ENCODE measurements at regions of chr15 and their contacts with region 1.

Region 1: DNA sequence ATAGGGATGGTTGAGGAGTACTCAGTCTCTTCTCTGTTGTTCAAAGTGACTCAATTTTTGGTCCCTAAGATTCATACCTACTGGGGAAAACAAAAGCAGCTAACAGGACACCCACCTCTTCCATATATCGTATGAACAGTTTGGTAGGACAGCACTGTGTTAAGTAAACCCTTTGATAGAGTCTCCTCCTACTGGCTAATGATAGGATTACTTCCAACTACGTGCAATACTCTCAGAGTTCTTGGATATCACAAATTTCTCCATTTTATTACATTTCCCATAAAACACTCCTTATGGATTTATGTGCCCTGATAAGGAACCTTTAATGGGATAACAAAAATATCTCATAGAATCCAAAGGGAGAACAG is 200.2 kb upstream of the GOLGA6L4 start:
- DNase-seq: no peak
- ATAC-seq: peak; percentile 55 to 67 (median 62)
- H3K4me3 ChIP-seq: no peak overlapping the region
- H3K27ac ChIP-seq: no peak overlapping the region
- H3K4me1 ChIP-seq: no peaks in the 10 kb centered on the region
- H3K27me3 ChIP-seq: no peaks in the 10 kb centered on the region
- CTCF ChIP-seq: peak; percentile 18 to 57 (median 46)
- POLR2A ChIP-seq: no peak

Region 2: DNA sequence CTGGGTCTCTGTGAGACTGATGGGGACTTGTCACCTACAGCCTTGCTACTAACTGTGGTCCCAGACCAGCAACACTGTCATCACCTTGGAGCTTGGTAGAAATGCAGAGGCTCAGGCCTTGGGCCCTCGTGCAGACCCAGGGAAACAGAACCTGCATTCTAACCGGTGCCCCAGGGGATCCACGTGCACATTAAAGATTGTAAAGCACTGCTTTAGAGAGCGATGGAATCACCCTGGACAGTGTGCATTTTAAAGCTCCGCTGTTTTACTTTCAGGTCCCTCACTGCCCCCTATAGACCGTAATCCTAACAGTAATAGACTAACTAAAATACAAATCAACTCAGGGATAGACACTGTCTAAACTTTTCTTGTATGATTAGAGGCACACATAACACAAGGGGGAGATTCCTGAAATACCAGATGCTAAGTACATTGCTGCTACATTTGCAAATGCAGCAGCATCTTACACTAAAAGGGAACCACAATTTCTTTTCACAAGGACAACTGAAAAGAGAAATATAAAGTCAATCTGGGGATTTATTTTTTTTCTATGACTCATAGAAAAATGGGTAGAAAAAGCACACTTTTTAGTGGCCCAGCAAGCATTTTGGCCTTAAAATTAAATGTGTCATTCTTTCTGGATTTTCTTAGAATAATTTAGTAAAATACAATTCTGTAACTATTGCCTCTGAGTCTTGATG is 598.8 kb before region 1 on chr15:
- intact Hi-C with region 1: loop called in 4 of 10 experiments (anchors 5 to 10 kb)
- DNase-seq: no peak
- ATAC-seq: peak in 2 of 4 donors; percentile 51 to 53
- H3K4me3 ChIP-seq: no peak overlapping the region
- H3K27ac ChIP-seq: no peak overlapping the region
- H3K4me1 ChIP-seq: no peaks in the 10 kb centered on the region
- H3K27me3 ChIP-seq: peaks cover 0 to 28% (median 6%) of the 10 kb centered on the region in 9 donors
- CTCF ChIP-seq: peak in 11 of 12 donors; percentile 24 to 47 (median 37)
- POLR2A ChIP-seq: no peak

Region 3: GRCh38 chr15:83559310-83559966 is 475.9 kb before region 1 on chr15:
- intact Hi-C with region 1: loop called in 3 of 10 experiments (anchors 5 to 10 kb)
- DNase-seq: peak in 3 of 5 donors; percentile 25 to 37 (median 28)
- ATAC-seq: peak in 3 of 4 donors; percentile 57 to 69 (median 61)
- H3K4me3 ChIP-seq: no peak overlapping the region
- H3K27ac ChIP-seq: no peak overlapping the region
- H3K4me1 ChIP-seq: no peaks in the 10 kb centered on the region
- H3K27me3 ChIP-seq: peaks cover 0 to 5% (median 0%) of the 10 kb centered on the region in 9 donors
- CTCF ChIP-seq: peak; percentile 58 to 83 (median 74)
- POLR2A ChIP-seq: no peak

Region 4: GRCh38 chr15:83653639-83654378 is 381.6 kb before region 1 on chr15 and contains the start of gene ADAMTSL3:
- intact Hi-C with region 1: loop called in 1 of 10 experiments (anchors 10 kb)
- DNase-seq: peak; percentile 84 to 92 (median 88)
- ATAC-seq: peak; percentile 3 to 81 (median 57)
- H3K4me3 ChIP-seq: peak within 1 kb of the TSS; percentile 43 to 85 (median 68)
- H3K27ac ChIP-seq: peak within 1 kb of the TSS; percentile 14 to 90 (median 82)
- H3K4me1 ChIP-seq: peaks cover 0 to 45% (median 11%) of the 10 kb centered on the region in 12 donors
- H3K27me3 ChIP-seq: peaks cover 0 to 18% (median 0%) of the 10 kb centered on the region in 9 donors
- CTCF ChIP-seq: peak in 5 of 12 donors; percentile 6 to 31 (median 13)
- POLR2A ChIP-seq: peak in 1 of 2 donors; percentile 29
- total RNA-seq, gene ADAMTSL3: 6.6 to 13.2 (median 7.7) TPM

Region 5: GRCh38 chr15:83739629-83740028 is 295.8 kb before region 1 on chr15:
- intact Hi-C with region 1: loop called in 8 of 10 experiments (anchors 5 to 10 kb)
- DNase-seq: no peak
- ATAC-seq: no peak
- H3K4me3 ChIP-seq: no peak overlapping the region
- H3K27ac ChIP-seq: no peak overlapping the region
- H3K4me1 ChIP-seq: no peaks in the 10 kb centered on the region
- H3K27me3 ChIP-seq: no peaks in the 10 kb centered on the region
- CTCF ChIP-seq: no peak
- POLR2A ChIP-seq: no peak

Region 6: GRCh38 chr15:83848315-83849050 is 186.9 kb before region 1 on chr15:
- intact Hi-C with region 1: no loop called
- DNase-seq: no peak
- ATAC-seq: peak; percentile 43 to 62 (median 52)
- H3K4me3 ChIP-seq: no peak overlapping the region
- H3K27ac ChIP-seq: peak overlapping the region in 10 of 12 donors; percentile 26 to 75 (median 62)
- H3K4me1 ChIP-seq: peaks cover 0 to 73% (median 20%) of the 10 kb centered on the region in 12 donors
- H3K27me3 ChIP-seq: no peaks in the 10 kb centered on the region
- CTCF ChIP-seq: no peak
- POLR2A ChIP-seq: no peak

Measured in heart left ventricle (tissue), 16 donors.